Activated CD4-positive, alpha-beta T cell treated with anti-CD3 and anti-CD28 coated beads for 36 hours (primary cell): ENCODE measurements at regions of chr3 and their contacts with region 1.

Region 1: GRCh38 chr3:128095222-128095703 is 28.3 kb downstream of the RUVBL1 start:
- DNase-seq: peak; percentile 88
- ATAC-seq: peak; percentile 98
- H3K4me3 Mint-ChIP-seq: no peak overlapping the region
- H3K27ac Mint-ChIP-seq: no peak overlapping the region
- H3K4me1 Mint-ChIP-seq: peaks cover 4% of the 10 kb centered on the region
- H3K27me3 Mint-ChIP-seq: no peaks in the 10 kb centered on the region

Region 2: GRCh38 chr3:128081846-128082245 is 13.4 kb before region 1 on chr3:
- CTCF ChIA-PET with region 1: interaction called, 15 read pairs
- POLR2A ChIA-PET with region 1: no interaction called
- intact Hi-C with region 1: no loop called
- DNase-seq: no peak
- ATAC-seq: no peak
- H3K4me3 Mint-ChIP-seq: no peak overlapping the region
- H3K27ac Mint-ChIP-seq: no peak overlapping the region
- H3K4me1 Mint-ChIP-seq: no peaks in the 10 kb centered on the region
- H3K27me3 Mint-ChIP-seq: no peaks in the 10 kb centered on the region

Region 3: GRCh38 chr3:128133273-128134084 is 38.2 kb after region 1 on chr3:
- CTCF ChIA-PET with region 1: interaction called, 22 read pairs
- POLR2A ChIA-PET with region 1: no interaction called
- intact Hi-C with region 1: loop called (anchors 1 to 2 kb)
- DNase-seq: peak; percentile 55
- ATAC-seq: no peak
- H3K4me3 Mint-ChIP-seq: no peak overlapping the region
- H3K27ac Mint-ChIP-seq: no peak overlapping the region
- H3K4me1 Mint-ChIP-seq: no peaks in the 10 kb centered on the region
- H3K27me3 Mint-ChIP-seq: no peaks in the 10 kb centered on the region

Region 4: GRCh38 chr3:128145337-128145736 is 50.1 kb after region 1 on chr3:
- CTCF ChIA-PET with region 1: no interaction called
- POLR2A ChIA-PET with region 1: no interaction called
- intact Hi-C with region 1: no loop called
- DNase-seq: no peak
- ATAC-seq: no peak
- H3K4me3 Mint-ChIP-seq: no peak overlapping the region
- H3K27ac Mint-ChIP-seq: no peak overlapping the region
- H3K4me1 Mint-ChIP-seq: no peaks in the 10 kb centered on the region
- H3K27me3 Mint-ChIP-seq: no peaks in the 10 kb centered on the region

Region 5: GRCh38 chr3:128383316-128384235 is 288.3 kb after region 1 on chr3:
- CTCF ChIA-PET with region 1: interaction called, 5 read pairs
- POLR2A ChIA-PET with region 1: no interaction called
- intact Hi-C with region 1: loop called in 1 of 2 experiments (anchors 10 kb)
- DNase-seq: peak; percentile 71
- ATAC-seq: peak; percentile 61
- H3K4me3 Mint-ChIP-seq: no peak overlapping the region
- H3K27ac Mint-ChIP-seq: no peak overlapping the region
- H3K4me1 Mint-ChIP-seq: no peaks in the 10 kb centered on the region
- H3K27me3 Mint-ChIP-seq: no peaks in the 10 kb centered on the region

Region 6: GRCh38 chr3:128497387-128498126 is 402.3 kb after region 1 on chr3:
- CTCF ChIA-PET with region 1: interaction called, 4 read pairs
- POLR2A ChIA-PET with region 1: no interaction called
- intact Hi-C with region 1: loop called in 1 of 2 experiments (anchors 2 kb)
- DNase-seq: peak; percentile 85
- ATAC-seq: peak; percentile 78
- H3K4me3 Mint-ChIP-seq: peak overlapping the region; percentile 61
- H3K27ac Mint-ChIP-seq: no peak overlapping the region
- H3K4me1 Mint-ChIP-seq: no peaks in the 10 kb centered on the region
- H3K27me3 Mint-ChIP-seq: peaks cover 42% of the 10 kb centered on the region

Region 7: GRCh38 chr3:128650096-128651050 is 555.1 kb after region 1 on chr3 and contains the start of gene RPN1:
- CTCF ChIA-PET with region 1: no interaction called
- POLR2A ChIA-PET with region 1: no interaction called
- intact Hi-C with region 1: no loop called
- DNase-seq: peak; percentile 97
- ATAC-seq: peak; percentile 97
- H3K4me3 Mint-ChIP-seq: peak within 1 kb of the TSS; percentile 81
- H3K27ac Mint-ChIP-seq: peak within 1 kb of the TSS; percentile 85
- H3K4me1 Mint-ChIP-seq: peaks cover 39% of the 10 kb centered on the region
- H3K27me3 Mint-ChIP-seq: no peaks in the 10 kb centered on the region
- total RNA-seq, gene RPN1: 138 to 153 TPM